Naive thymus-derived CD4-positive, alpha-beta T cell (primary cell): ENCODE measurements at regions of chr12 and their contacts with region 1.

Region 1: GRCh38 chr12:12616512-12617310 is 5.0 kb downstream of the CREBL2 start:
- DNase-seq: peak in 4 of 9 donors; percentile 22 to 37 (median 28)
- ATAC-seq: no peak
- H3K4me3 ChIP-seq: no peak overlapping the region
- H3K4me3 Mint-ChIP-seq: peak overlapping the region; percentile 29 to 74 (median 64)
- H3K27ac ChIP-seq: peak overlapping the region; percentile 60
- H3K27ac Mint-ChIP-seq: peak overlapping the region; percentile 44 to 87 (median 70)
- H3K4me1 ChIP-seq: peaks cover 20 to 35% of the 10 kb centered on the region in 2 donors
- H3K4me1 Mint-ChIP-seq: peaks cover 39 to 84% (median 67%) of the 10 kb centered on the region in 7 donors
- H3K27me3 ChIP-seq: no peaks in the 10 kb centered on the region
- H3K27me3 Mint-ChIP-seq: no peaks in the 10 kb centered on the region

Region 2: GRCh38 chr12:10705655-10706054 is 1911.1 kb before region 1 on chr12:
- CTCF ChIA-PET with region 1: no interaction called
- POLR2A ChIA-PET with region 1: no interaction called
- intact Hi-C with region 1: no loop called
- DNase-seq: no peak
- ATAC-seq: no peak
- H3K4me3 ChIP-seq: no peak overlapping the region
- H3K4me3 Mint-ChIP-seq: no peak overlapping the region
- H3K27ac ChIP-seq: no peak overlapping the region
- H3K27ac Mint-ChIP-seq: no peak overlapping the region
- H3K4me1 ChIP-seq: peaks cover 0 to 10% of the 10 kb centered on the region in 2 donors
- H3K4me1 Mint-ChIP-seq: peaks cover 0 to 13% (median 12%) of the 10 kb centered on the region in 7 donors
- H3K27me3 ChIP-seq: no peaks in the 10 kb centered on the region
- H3K27me3 Mint-ChIP-seq: peaks cover 0 to 15% (median 0%) of the 10 kb centered on the region in 5 donors

Region 3: DNA sequence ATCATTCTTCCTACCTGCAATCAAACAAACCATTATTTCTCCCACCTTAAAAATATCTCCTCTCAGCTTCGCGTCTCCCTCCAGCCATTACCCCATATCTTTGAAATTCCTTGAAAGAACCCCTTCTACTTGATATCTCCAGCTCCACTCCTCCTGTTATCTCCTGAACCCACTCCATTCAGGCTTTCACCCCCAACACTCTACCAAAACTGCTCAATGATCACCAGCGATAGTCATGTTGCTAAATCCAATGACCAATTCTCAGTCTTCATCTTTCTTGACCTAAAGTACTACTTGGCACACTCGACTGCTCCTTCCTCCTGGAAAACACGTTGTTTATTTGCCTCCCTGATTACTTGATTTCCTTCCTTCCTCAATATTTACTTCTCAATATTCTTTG is 124.2 kb before region 1 on chr12:
- CTCF ChIA-PET with region 1: no interaction called
- POLR2A ChIA-PET with region 1: no interaction called
- intact Hi-C with region 1: no loop called
- DNase-seq: no peak
- ATAC-seq: no peak
- H3K4me3 ChIP-seq: no peak overlapping the region
- H3K4me3 Mint-ChIP-seq: no peak overlapping the region
- H3K27ac ChIP-seq: no peak overlapping the region
- H3K27ac Mint-ChIP-seq: no peak overlapping the region
- H3K4me1 ChIP-seq: no peaks in the 10 kb centered on the region
- H3K4me1 Mint-ChIP-seq: peaks cover 3 to 24% (median 7%) of the 10 kb centered on the region in 7 donors
- H3K27me3 ChIP-seq: no peaks in the 10 kb centered on the region
- H3K27me3 Mint-ChIP-seq: no peaks in the 10 kb centered on the region

Region 4: DNA sequence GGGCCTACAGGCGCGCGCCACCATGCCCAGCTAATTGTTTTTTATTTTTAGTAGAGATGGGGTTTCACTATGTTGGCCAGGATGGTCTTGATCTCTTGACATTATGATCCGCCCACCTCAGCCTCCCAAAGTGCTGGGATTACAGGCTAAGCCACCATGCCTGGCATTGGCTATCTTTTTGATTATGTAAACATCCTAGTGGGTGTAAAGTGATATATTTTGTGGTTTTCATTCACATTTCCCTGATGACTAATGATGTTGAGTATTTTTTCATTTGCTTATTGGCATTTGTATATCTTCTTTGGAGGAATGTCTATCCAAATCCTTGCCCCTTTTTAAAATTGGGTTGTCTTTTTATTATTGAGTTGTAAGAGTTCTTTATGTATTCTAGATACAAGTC is 11.3 kb after region 1 on chr12:
- CTCF ChIA-PET with region 1: interaction called, 3 read pairs
- POLR2A ChIA-PET with region 1: interaction called, 40 read pairs
- intact Hi-C with region 1: loop called in 1 of 2 experiments (anchors 1 kb)
- DNase-seq: no peak
- ATAC-seq: no peak
- H3K4me3 ChIP-seq: no peak overlapping the region
- H3K4me3 Mint-ChIP-seq: peak overlapping the region in 2 of 10 donors; percentile 21 to 36
- H3K27ac ChIP-seq: no peak overlapping the region
- H3K27ac Mint-ChIP-seq: peak overlapping the region in 3 of 9 donors; percentile 14 to 65 (median 15)
- H3K4me1 ChIP-seq: peaks cover 10 to 40% of the 10 kb centered on the region in 2 donors
- H3K4me1 Mint-ChIP-seq: peaks cover 40 to 86% (median 83%) of the 10 kb centered on the region in 7 donors
- H3K27me3 ChIP-seq: no peaks in the 10 kb centered on the region
- H3K27me3 Mint-ChIP-seq: no peaks in the 10 kb centered on the region